AG04450 (cell line): ENCODE measurements at regions of chr2 and their contacts with region 1.

Region 1: DNA sequence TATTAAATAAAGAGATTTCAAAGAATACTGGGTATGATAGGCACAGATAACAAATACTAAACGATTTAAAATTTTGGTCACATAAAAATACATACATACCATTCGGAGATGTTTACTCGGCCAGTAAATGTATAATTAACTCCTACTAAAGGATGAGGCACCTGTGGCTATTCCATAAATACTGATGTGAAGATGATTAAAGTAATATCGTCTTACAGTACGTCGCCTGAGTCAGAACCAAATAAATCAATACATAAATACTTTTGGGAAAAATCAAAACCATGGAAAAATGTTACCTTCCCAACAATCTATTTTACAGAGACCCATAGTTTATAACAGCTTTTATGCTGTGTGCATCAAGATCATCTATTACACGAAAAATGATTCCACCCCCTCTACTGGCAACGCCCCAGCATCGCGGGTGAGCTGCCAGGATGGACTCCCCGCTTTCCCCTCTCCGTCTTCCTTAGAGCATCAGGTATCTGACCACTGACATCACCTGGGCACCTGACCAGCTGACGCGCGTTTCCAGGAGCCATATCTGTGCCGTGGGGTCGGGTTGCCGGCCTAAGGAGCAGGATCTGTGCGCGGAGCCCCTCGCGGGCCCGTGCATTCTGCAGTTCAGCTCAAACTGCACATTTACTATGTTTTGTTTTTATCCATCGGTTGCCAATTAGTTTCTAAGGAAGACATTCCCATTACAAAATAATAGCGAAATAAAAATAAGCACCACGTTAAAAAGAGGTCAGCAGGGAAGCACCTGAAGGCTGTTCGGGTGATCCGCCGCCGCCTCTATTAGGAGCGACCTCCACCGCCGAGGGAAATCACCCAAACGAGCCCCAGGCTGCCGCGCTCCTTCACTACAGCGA is 901 bp downstream of the ICA1L start:
- DNase-seq: no peak
- H3K4me3 ChIP-seq: peak overlapping the region; percentile 78
- H3K27ac ChIP-seq: peak overlapping the region; percentile 52
- H3K27me3 ChIP-seq: no peaks in the 10 kb centered on the region
- CTCF ChIP-seq: peak; percentile 55

Region 2: DNA sequence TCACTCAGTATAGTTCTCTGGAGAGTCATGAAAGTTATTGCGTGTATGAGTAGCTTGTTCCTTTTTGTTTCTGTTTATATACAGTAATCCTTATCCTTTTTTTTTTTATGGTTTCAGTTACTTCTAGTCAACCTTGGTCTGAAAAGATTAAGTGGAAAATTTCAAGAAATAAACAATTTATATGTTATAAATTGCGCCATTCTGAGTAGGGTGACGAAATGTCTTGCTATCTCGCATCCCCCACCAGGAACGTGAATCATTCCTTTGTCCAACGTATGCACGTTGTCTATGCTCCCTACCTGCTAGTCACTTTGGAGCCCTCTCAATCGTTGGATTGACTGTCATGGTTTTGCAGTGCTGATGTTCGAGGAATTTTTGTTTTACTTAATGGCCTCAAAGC is 175.5 kb before region 1 on chr2:
- CTCF ChIA-PET with region 1: no interaction called
- POLR2A ChIA-PET with region 1: no interaction called
- DNase-seq: peak; percentile 27
- H3K4me3 ChIP-seq: no peak overlapping the region
- H3K27ac ChIP-seq: no peak overlapping the region
- H3K27me3 ChIP-seq: no peaks in the 10 kb centered on the region
- CTCF ChIP-seq: no peak

Region 3: GRCh38 chr2:202841088-202841867 is 29.4 kb before region 1 on chr2:
- CTCF ChIA-PET with region 1: no interaction called
- POLR2A ChIA-PET with region 1: interaction called, 11 read pairs
- DNase-seq: no peak
- H3K4me3 ChIP-seq: no peak overlapping the region
- H3K27ac ChIP-seq: no peak overlapping the region
- H3K27me3 ChIP-seq: no peaks in the 10 kb centered on the region
- CTCF ChIP-seq: no peak

Region 4: GRCh38 chr2:203431391-203432185 is 560.9 kb after region 1 on chr2:
- CTCF ChIA-PET with region 1: interaction called, 13 read pairs
- POLR2A ChIA-PET with region 1: no interaction called
- DNase-seq: no peak
- H3K4me3 ChIP-seq: no peak overlapping the region
- H3K27ac ChIP-seq: no peak overlapping the region
- H3K27me3 ChIP-seq: no peaks in the 10 kb centered on the region
- CTCF ChIP-seq: no peak